ENCODE measurements at regions of chr2 and their contacts with region 1.

Region 1: GRCh38 chr2:189096769-189097447 is 82.7 kb downstream of the COL5A2 start:
- DNase-seq: no peak
- H3K4me3 ChIP-seq: no peak overlapping the region
- H3K27ac ChIP-seq: no peak overlapping the region
- H3K4me1 ChIP-seq: no peaks in the 10 kb centered on the region
- H3K27me3 ChIP-seq: no peaks in the 10 kb centered on the region
- CTCF ChIP-seq: no peak
- POLR2A ChIP-seq: no peak

Region 2: DNA sequence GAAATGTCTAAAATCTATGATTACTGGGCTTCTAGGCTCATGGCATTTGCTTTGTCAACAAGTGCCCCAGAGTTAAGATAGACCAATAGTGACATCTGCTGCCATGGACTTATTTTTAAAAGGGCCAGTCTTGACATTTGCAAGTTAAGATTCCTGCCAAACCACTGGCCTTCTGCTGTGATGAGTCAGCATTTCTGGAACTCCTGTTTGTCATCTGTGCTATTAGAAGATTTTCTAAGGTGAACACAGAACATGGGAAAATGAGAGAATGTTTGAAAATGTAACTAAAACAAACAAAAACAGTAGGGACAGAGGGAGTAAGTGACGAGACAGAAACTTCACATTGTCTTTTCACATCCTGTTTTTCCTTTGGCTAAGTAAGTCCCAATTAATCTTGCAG is 250.6 kb after region 1 on chr2:
- intact Hi-C with region 1: loop called in 1 of 2 experiments (anchors 10 kb)
- DNase-seq: peak; percentile 60 to 84 (median 73)
- H3K4me3 ChIP-seq: no peak overlapping the region
- H3K27ac ChIP-seq: peak overlapping the region in 4 of 5 donors; percentile 30 to 79 (median 72)
- H3K4me1 ChIP-seq: peaks cover 0 to 15% of the 10 kb centered on the region in 2 donors
- H3K27me3 ChIP-seq: no peaks in the 10 kb centered on the region
- CTCF ChIP-seq: peak in 3 of 6 experiments; percentile 39 to 62 (median 50)
- POLR2A ChIP-seq: no peak

Region 3: GRCh38 chr2:189412330-189412953 is 315.5 kb after region 1 on chr2:
- intact Hi-C with region 1: loop called (anchors 5 to 10 kb)
- DNase-seq: peak in 5 of 7 donors; percentile 19 to 51 (median 35)
- H3K4me3 ChIP-seq: no peak overlapping the region
- H3K27ac ChIP-seq: no peak overlapping the region
- H3K4me1 ChIP-seq: peaks cover 0 to 8% of the 10 kb centered on the region in 2 donors
- H3K27me3 ChIP-seq: no peaks in the 10 kb centered on the region
- CTCF ChIP-seq: peak; percentile 53 to 90 (median 82)
- POLR2A ChIP-seq: no peak

Measured in adrenal gland (tissue), 19 donors.